ENCODE measurements at regions of chr11 and their contacts with region 1.

Region 1: GRCh38 chr11:129750349-129751292 is 65.0 kb upstream of the TMEM45B start:
- ATAC-seq: peak; percentile 86 to 99 (median 96)
- H3K4me3 ChIP-seq: peak overlapping the region in 2 of 5 donors; percentile 8 to 22
- H3K27ac ChIP-seq: no peak overlapping the region
- H3K4me1 ChIP-seq: no peaks in the 10 kb centered on the region

Region 2: GRCh38 chr11:128884703-128885338 is 865.8 kb before region 1 on chr11:
- in situ Hi-C with region 1: loop called in 1 of 9 experiments (anchors 25 kb)
- ATAC-seq: peak; percentile 76 to 94 (median 82)
- H3K4me3 ChIP-seq: no peak overlapping the region
- H3K27ac ChIP-seq: no peak overlapping the region
- H3K4me1 ChIP-seq: peaks cover 18 to 20% of the 10 kb centered on the region in 2 donors

Region 3: GRCh38 chr11:129117595-129118350 is 632.8 kb before region 1 on chr11:
- in situ Hi-C with region 1: loop called in 1 of 9 experiments (anchors 25 kb)
- ATAC-seq: peak in 4 of 8 experiments; percentile 22 to 55 (median 42)
- H3K4me3 ChIP-seq: no peak overlapping the region
- H3K27ac ChIP-seq: no peak overlapping the region
- H3K4me1 ChIP-seq: no peaks in the 10 kb centered on the region

Region 4: GRCh38 chr11:129364143-129364654 is 386.4 kb before region 1 on chr11:
- in situ Hi-C with region 1: loop called in 7 of 9 experiments (anchors 10 to 25 kb)
- ATAC-seq: peak; percentile 99 to 100 (median 100)
- H3K4me3 ChIP-seq: no peak overlapping the region
- H3K27ac ChIP-seq: no peak overlapping the region
- H3K4me1 ChIP-seq: no peaks in the 10 kb centered on the region

Region 5: GRCh38 chr11:129504956-129505665 is 245.5 kb before region 1 on chr11:
- in situ Hi-C with region 1: no loop called
- ATAC-seq: no peak
- H3K4me3 ChIP-seq: no peak overlapping the region
- H3K27ac ChIP-seq: no peak overlapping the region
- H3K4me1 ChIP-seq: no peaks in the 10 kb centered on the region

Region 6: DNA sequence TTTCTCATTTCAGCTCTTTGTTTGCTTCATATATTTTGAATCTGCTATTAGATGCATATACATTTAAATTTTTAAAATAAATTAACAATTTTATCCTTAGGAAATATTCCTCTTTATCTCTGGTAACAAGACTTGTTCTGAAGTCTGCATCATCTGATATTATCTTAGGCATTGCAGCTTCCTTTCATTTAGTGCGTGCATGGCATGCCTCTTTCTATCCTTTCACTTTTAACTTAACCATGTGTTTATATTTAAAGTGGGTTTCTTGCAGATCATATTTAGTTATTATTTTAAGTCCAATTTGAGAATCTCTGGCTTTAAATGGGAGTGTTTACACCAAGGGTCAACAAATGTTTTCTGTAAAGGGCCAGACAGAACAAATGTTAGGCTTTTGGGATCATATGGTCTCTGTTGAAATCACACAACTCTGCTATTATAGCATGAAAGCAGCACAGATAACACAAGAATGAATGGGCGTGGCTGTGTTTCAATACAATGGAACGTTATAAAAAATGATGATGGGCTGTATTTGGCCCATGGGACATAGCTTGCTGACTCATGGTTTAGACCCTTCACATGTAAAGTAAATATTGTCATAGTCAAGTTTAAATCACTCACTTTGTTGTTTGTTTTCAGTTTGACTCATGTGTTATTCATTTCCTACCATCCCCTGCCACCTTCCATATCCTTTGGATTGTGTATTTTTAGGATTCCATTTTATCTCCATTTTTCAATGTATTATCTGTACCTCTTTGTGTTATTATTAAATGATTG is 1249.6 kb after region 1 on chr11:
- in situ Hi-C with region 1: no loop called
- ATAC-seq: peak in 3 of 8 experiments; percentile 8 to 61 (median 41)
- H3K4me3 ChIP-seq: no peak overlapping the region
- H3K27ac ChIP-seq: no peak overlapping the region
- H3K4me1 ChIP-seq: no peaks in the 10 kb centered on the region